ENCODE measurements at regions of chr2 and their contacts with region 1.

Region 1: DNA sequence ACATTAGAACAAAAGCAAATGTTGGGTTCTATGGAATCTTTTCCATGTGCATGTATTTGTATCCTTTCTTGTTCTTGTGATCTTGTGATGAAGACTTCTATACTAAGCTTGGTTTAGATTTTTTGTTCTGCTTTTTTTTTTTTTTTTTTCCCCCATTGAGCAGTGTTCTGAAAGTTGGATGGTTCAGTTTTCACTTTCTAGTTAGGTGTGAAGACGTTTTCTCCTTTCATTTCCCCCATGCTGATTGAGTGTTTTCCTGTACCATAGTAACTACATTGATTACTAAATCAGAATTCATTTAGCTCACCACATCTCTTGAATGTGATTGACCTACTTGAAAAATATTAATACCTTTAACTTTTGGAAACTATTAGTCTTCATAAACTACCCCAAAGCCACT is 34.1 kb downstream of the NOP58 start:
- DNase-seq: no peak
- H3K4me3 Mint-ChIP-seq: no peak overlapping the region
- H3K27ac Mint-ChIP-seq: peak overlapping the region; percentile 87
- H3K4me1 Mint-ChIP-seq: peaks cover 59% of the 10 kb centered on the region
- H3K27me3 Mint-ChIP-seq: no peaks in the 10 kb centered on the region

Region 2: DNA sequence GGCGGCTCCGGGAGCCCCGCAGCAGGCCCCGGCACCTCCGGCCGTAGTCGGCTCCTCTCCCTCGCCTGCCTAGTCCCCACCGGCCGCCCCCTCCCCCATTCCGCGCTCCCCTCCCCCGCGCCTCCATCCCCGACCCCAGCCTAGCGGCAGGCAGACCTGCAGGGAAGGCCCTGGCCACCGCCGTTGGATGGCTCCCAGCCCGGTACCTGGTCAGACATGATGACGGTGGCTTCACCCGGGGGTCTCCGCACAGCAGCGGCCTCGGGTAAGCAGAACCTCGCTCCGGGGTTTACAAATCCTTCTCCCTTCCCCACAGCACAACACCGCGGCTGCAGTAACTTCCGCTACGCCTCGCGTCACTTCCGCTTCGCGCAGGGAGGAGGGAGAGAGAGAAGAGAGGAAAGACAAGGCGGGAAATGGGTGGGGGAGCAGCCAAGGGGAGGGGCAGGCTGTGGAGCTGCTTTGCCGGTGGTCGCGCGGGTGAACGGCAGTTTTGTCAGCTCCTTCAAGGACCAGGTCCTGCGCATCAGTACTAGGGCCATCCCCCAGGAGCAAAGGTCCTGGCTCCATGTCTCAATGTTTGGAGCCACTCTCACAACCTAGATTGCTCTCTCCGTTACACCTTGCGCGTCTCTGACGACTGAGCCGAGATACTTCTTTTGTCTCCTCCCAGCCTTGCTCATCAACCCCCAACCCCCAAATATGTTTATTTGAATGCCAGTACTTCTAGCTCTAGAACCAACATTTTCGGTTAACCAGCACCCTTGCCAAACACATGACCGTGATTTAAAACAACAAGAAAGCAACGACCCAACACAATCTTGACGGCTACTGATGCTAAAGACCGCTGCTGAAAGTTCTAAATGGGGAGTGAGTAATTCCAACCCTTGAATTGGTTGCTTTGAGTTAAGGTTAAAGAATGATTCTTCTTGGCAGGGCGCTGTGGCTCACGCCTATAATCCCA is 61.2 kb before region 1 on chr2 and contains the start of gene SUMO1:
- CTCF ChIA-PET with region 1: no interaction called
- intact Hi-C with region 1: loop called (anchors 2 kb)
- DNase-seq: peak; percentile 97
- H3K4me3 Mint-ChIP-seq: peak within 1 kb of the TSS; percentile 97
- H3K27ac Mint-ChIP-seq: peak within 1 kb of the TSS; percentile 91
- H3K4me1 Mint-ChIP-seq: peaks cover 31% of the 10 kb centered on the region
- H3K27me3 Mint-ChIP-seq: no peaks in the 10 kb centered on the region
- total RNA-seq, gene SUMO1: 131 to 132 TPM

Region 3: GRCh38 chr2:202278944-202279343 is 20.8 kb before region 1 on chr2:
- CTCF ChIA-PET with region 1: interaction called, 5 read pairs
- intact Hi-C with region 1: loop called (anchors 1 kb)
- DNase-seq: no peak
- H3K4me3 Mint-ChIP-seq: no peak overlapping the region
- H3K27ac Mint-ChIP-seq: peak overlapping the region; percentile 92
- H3K4me1 Mint-ChIP-seq: peaks cover 51% of the 10 kb centered on the region
- H3K27me3 Mint-ChIP-seq: no peaks in the 10 kb centered on the region

Measured in activated naive CD4-positive, alpha-beta T cell treated with anti-CD3 and anti-CD28 coated beads for 36 hours (primary cell).